Activated CD8-positive, alpha-beta T cell treated with anti-CD3 and anti-CD28 coated beads, Interleukin-2, amount 10 ng/mL, durations not matched to agents 7 days and 5 days (primary cell): ENCODE measurements at regions of chr3 and their contacts with region 1.

Region 1: GRCh38 chr3:70108072-70108471 is 108.5 kb downstream of the SAMMSON start:
- DNase-seq: peak; percentile 22
- ATAC-seq: no peak
- H3K4me3 Mint-ChIP-seq: no peak overlapping the region
- H3K27ac Mint-ChIP-seq: no peak overlapping the region
- H3K4me1 Mint-ChIP-seq: no peaks in the 10 kb centered on the region
- H3K27me3 Mint-ChIP-seq: no peaks in the 10 kb centered on the region

Region 2: GRCh38 chr3:70120357-70121121 is 12.5 kb after region 1 on chr3:
- CTCF ChIA-PET with region 1: interaction called, 11 read pairs
- POLR2A ChIA-PET with region 1: no interaction called
- DNase-seq: peak; percentile 70
- ATAC-seq: no peak
- H3K4me3 Mint-ChIP-seq: no peak overlapping the region
- H3K27ac Mint-ChIP-seq: no peak overlapping the region
- H3K4me1 Mint-ChIP-seq: no peaks in the 10 kb centered on the region
- H3K27me3 Mint-ChIP-seq: no peaks in the 10 kb centered on the region